A549 (cell line): ENCODE measurements at regions of chr7 and their contacts with region 1.

Region 1: GRCh38 chr7:47254081-47255006 is 327.6 kb downstream of the TNS3 start:
- DNase-seq: peak; percentile 59 to 74
- ATAC-seq: peak; percentile 81 to 93
- H3K4me3 ChIP-seq: peak overlapping the region; percentile 61
- H3K27ac ChIP-seq: peak overlapping the region; percentile 80 to 91
- H3K4me1 ChIP-seq: peaks cover 13% of the 10 kb centered on the region
- CTCF ChIP-seq: peak; percentile 97
- EP300 ChIP-seq: no peak
- POLR2A ChIP-seq: peak; percentile 41
- RAD21 ChIP-seq: peak; percentile 60 to 87

Region 2: GRCh38 chr7:47239931-47240421 is 14.4 kb before region 1 on chr7:
- CTCF ChIA-PET with region 1: interaction called, 56 read pairs
- POLR2A ChIA-PET with region 1: no interaction called
- DNase-seq: no peak
- ATAC-seq: no peak
- H3K4me3 ChIP-seq: no peak overlapping the region
- H3K27ac ChIP-seq: no peak overlapping the region
- H3K4me1 ChIP-seq: no peaks in the 10 kb centered on the region
- CTCF ChIP-seq: no peak
- EP300 ChIP-seq: no peak
- POLR2A ChIP-seq: no peak
- RAD21 ChIP-seq: no peak